ENCODE measurements at regions of chr4 and their contacts with region 1.

Region 1: GRCh38 chr4:159757499-159757898 is 654.6 kb downstream of the RAPGEF2 start:
- DNase-seq: no peak
- H3K4me3 Mint-ChIP-seq: no peak overlapping the region
- H3K27ac Mint-ChIP-seq: no peak overlapping the region
- H3K4me1 Mint-ChIP-seq: peaks cover 8% of the 10 kb centered on the region
- H3K27me3 Mint-ChIP-seq: no peaks in the 10 kb centered on the region
- CTCF ChIP-seq: no peak

Region 2: DNA sequence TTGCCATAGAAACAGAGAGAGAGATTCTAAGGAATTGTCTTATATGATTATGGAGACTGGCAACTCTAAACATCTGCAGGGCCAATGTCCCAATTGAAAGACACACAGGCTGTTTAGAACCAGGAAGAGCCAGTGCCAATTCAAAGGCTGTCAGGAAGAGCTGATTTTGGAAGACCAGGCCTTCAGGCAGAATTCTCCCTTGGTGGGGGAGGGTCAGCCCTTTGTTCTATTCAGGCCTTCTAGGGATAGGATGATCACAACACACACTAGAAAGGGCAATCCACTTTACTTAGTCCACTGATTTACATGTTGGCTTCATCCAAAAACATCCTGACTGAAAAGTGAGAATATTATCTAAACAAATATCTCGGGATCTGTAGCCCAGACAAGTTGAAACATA is 1101.1 kb before region 1 on chr4:
- CTCF ChIA-PET with region 1: no interaction called
- intact Hi-C with region 1: no loop called
- DNase-seq: no peak
- H3K4me3 Mint-ChIP-seq: no peak overlapping the region
- H3K27ac Mint-ChIP-seq: no peak overlapping the region
- H3K4me1 Mint-ChIP-seq: no peaks in the 10 kb centered on the region
- H3K27me3 Mint-ChIP-seq: peaks cover 12% of the 10 kb centered on the region
- CTCF ChIP-seq: no peak

Region 3: DNA sequence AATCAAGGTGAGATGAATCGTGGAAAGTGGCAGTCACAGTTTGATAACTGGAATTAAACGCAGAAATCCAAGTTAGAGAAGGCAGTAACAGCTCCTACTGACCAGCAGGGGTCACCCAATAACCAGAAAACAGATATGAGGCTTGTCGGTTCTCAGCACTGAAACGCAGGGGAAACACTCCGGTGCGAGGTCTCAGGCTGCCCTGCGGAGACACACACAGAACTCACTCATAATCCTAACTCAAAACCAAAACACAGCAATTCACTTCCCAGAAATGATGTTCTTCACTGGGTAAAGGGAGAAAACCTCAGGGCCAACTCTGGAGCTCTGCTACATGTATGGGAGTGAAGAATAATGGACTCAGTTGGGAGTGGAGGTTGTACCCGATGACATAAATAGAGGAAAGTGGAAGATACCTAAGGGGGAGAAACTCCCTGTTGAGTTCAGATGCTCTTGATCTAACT is 270.2 kb before region 1 on chr4:
- CTCF ChIA-PET with region 1: no interaction called
- intact Hi-C with region 1: loop called (anchors 5 kb)
- DNase-seq: peak; percentile 59
- H3K4me3 Mint-ChIP-seq: peak overlapping the region; percentile 34
- H3K27ac Mint-ChIP-seq: no peak overlapping the region
- H3K4me1 Mint-ChIP-seq: no peaks in the 10 kb centered on the region
- H3K27me3 Mint-ChIP-seq: no peaks in the 10 kb centered on the region
- CTCF ChIP-seq: peak; percentile 52